ENCODE measurements at regions of chr15 and their contacts with region 1.

Region 1: GRCh38 chr15:80776420-80777045 is 2.6 kb upstream of the CEMIP start:
- H3K4me3 Mint-ChIP-seq: no peak overlapping the region
- H3K27ac Mint-ChIP-seq: no peak overlapping the region
- H3K4me1 Mint-ChIP-seq: peaks cover 35% of the 10 kb centered on the region
- H3K27me3 Mint-ChIP-seq: peaks cover 55% of the 10 kb centered on the region

Region 2: DNA sequence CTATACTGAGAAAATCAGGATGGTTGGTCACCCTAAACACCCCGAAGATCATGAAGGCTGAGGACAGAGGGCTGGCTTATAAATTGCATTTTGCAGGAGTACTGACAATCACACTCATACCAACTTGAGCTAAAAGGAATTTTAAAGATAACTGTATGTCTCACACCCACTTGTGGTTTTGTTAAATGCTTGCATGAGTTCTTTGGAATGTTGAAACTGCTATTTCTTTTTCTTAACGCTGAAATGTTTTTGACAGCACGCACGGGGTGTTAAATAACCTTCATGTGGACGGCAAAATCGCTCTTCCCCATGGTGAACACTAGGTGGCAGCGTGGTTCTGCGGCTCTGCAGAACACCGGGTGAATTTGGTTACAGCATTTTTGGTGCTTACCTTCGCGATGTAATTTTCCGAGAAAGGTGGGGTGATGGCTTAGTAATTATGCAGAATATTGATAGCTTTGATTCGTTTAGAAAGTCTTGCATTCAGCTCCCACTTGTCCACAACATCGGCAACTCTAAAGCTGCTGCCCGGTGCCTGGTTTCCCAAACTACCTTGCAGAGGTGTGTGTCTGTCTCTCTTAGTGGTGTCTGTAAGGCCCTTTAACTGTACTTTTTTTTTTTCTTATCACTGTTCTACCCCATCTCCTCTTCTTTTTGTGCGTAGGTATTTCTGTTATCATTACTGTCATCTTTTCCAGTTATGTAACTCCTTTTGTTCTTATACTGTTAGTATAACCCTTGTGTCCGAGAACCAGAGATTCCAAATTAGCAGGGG is 320.7 kb before region 1 on chr15:
- intact Hi-C with region 1: loop called (anchors 1 kb)
- H3K4me3 Mint-ChIP-seq: no peak overlapping the region
- H3K27ac Mint-ChIP-seq: no peak overlapping the region
- H3K4me1 Mint-ChIP-seq: peaks cover 17% of the 10 kb centered on the region
- H3K27me3 Mint-ChIP-seq: peaks cover 94% of the 10 kb centered on the region

Region 3: GRCh38 chr15:80567721-80568157 is 208.8 kb before region 1 on chr15:
- intact Hi-C with region 1: loop called (anchors 1 kb)
- H3K4me3 Mint-ChIP-seq: no peak overlapping the region
- H3K27ac Mint-ChIP-seq: no peak overlapping the region
- H3K4me1 Mint-ChIP-seq: no peaks in the 10 kb centered on the region
- H3K27me3 Mint-ChIP-seq: peaks cover 38% of the 10 kb centered on the region

Region 4: GRCh38 chr15:80695104-80695910 is 81.2 kb before region 1 on chr15 and contains the start of gene ABHD17C:
- intact Hi-C with region 1: loop called (anchors 10 kb)
- H3K4me3 Mint-ChIP-seq: peak within 1 kb of the TSS; percentile 78
- H3K27ac Mint-ChIP-seq: peak within 1 kb of the TSS; percentile 45
- H3K4me1 Mint-ChIP-seq: peaks cover 22% of the 10 kb centered on the region
- H3K27me3 Mint-ChIP-seq: peaks cover 26% of the 10 kb centered on the region

Region 5: GRCh38 chr15:80970018-80970658 is 193.6 kb after region 1 on chr15:
- intact Hi-C with region 1: loop called (anchors 10 kb)
- H3K4me3 Mint-ChIP-seq: no peak overlapping the region
- H3K27ac Mint-ChIP-seq: no peak overlapping the region
- H3K4me1 Mint-ChIP-seq: no peaks in the 10 kb centered on the region
- H3K27me3 Mint-ChIP-seq: no peaks in the 10 kb centered on the region

Measured in dendritic cell treated with granulocyte-macrophage colony-stimulating factor and Interleukin-4, amounts not matched to agents 40 ng/mL and 50 ng/mL, for 4 days (primary cell).